ENCODE measurements at regions of chr10 and their contacts with region 1.

Region 1: GRCh38 chr10:119750391-119751230 is 24.8 kb downstream of the INPP5F start:
- DNase-seq: peak; percentile 82
- H3K4me3 ChIP-seq: no peak overlapping the region
- H3K27ac ChIP-seq: no peak overlapping the region
- H3K4me1 ChIP-seq: peaks cover 8% of the 10 kb centered on the region
- H3K27me3 ChIP-seq: no peaks in the 10 kb centered on the region
- CTCF ChIP-seq: peak; percentile 86 to 94
- POLR2A ChIP-seq: no peak

Region 2: DNA sequence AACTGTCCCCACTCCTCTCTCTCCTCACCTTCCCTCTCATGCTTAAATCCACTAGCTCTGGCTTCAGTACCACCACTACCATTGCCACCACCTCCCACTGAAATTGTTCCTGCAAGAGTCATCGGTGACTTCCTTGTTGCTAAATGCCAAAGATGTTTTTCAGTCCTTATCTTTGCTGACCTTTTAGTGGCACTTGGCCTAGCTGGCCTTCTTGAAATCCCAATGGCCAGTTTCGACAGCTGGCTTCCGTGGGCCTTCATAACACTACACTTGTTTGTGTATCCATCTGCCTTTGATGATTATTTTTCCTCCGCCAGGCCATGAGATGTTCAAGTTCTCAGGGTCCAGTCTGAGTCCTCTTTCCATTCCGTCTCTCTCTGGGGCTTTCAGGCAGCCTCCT is 839.2 kb before region 1 on chr10:
- CTCF ChIA-PET with region 1: no interaction called
- POLR2A ChIA-PET with region 1: no interaction called
- dilution Hi-C with region 1: no loop called
- intact Hi-C with region 1: no loop called
- DNase-seq: peak; percentile 12
- H3K4me3 ChIP-seq: no peak overlapping the region
- H3K27ac ChIP-seq: no peak overlapping the region
- H3K4me1 ChIP-seq: peaks cover 3% of the 10 kb centered on the region
- H3K27me3 ChIP-seq: peaks cover 8% of the 10 kb centered on the region in 2 experiments
- CTCF ChIP-seq: no peak
- POLR2A ChIP-seq: no peak

Region 3: GRCh38 chr10:119680050-119680449 is 70.6 kb before region 1 on chr10:
- CTCF ChIA-PET with region 1: interaction called, 75 read pairs
- POLR2A ChIA-PET with region 1: no interaction called
- dilution Hi-C with region 1: no loop called
- intact Hi-C with region 1: no loop called
- DNase-seq: peak; percentile 86
- H3K4me3 ChIP-seq: no peak overlapping the region
- H3K27ac ChIP-seq: peak overlapping the region; percentile 92
- H3K4me1 ChIP-seq: peaks cover 25% of the 10 kb centered on the region
- H3K27me3 ChIP-seq: no peaks in the 10 kb centered on the region
- CTCF ChIP-seq: no peak
- POLR2A ChIP-seq: peak; percentile 67

Region 4: DNA sequence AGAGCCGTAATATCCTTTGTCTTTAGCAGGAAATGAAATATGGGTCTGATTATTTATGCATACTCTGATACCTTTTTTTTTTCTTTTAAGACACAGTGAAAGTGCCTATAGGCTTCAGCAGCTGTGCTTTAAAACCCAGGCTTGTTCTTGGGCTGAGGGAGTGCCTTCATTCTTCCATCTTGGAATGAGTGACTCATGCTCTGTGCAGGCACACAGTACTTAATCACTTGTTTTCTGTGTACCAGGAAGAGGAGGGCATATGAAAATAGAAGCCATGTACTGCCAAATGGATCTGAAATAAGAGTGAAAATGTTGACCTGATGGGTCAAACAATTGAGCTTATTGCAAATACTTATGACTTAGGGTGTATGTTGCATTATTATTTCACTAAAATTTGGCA is 12.8 kb before region 1 on chr10:
- CTCF ChIA-PET with region 1: interaction called, 25 read pairs
- POLR2A ChIA-PET with region 1: interaction called, 3 read pairs
- dilution Hi-C with region 1: no loop called
- intact Hi-C with region 1: no loop called
- DNase-seq: peak; percentile 94
- H3K4me3 ChIP-seq: peak overlapping the region in 1 of 3 experiments; percentile 31
- H3K27ac ChIP-seq: peak overlapping the region; percentile 62
- H3K4me1 ChIP-seq: peaks cover 24% of the 10 kb centered on the region
- H3K27me3 ChIP-seq: no peaks in the 10 kb centered on the region
- CTCF ChIP-seq: no peak
- POLR2A ChIP-seq: no peak

Region 5: GRCh38 chr10:119784340-119785070 is 33.9 kb after region 1 on chr10:
- CTCF ChIA-PET with region 1: interaction called, 10 read pairs
- POLR2A ChIA-PET with region 1: no interaction called
- dilution Hi-C with region 1: no loop called
- intact Hi-C with region 1: no loop called
- DNase-seq: no peak
- H3K4me3 ChIP-seq: no peak overlapping the region
- H3K27ac ChIP-seq: no peak overlapping the region
- H3K4me1 ChIP-seq: peaks cover 24% of the 10 kb centered on the region
- H3K27me3 ChIP-seq: no peaks in the 10 kb centered on the region
- CTCF ChIP-seq: no peak
- POLR2A ChIP-seq: no peak

Region 6: DNA sequence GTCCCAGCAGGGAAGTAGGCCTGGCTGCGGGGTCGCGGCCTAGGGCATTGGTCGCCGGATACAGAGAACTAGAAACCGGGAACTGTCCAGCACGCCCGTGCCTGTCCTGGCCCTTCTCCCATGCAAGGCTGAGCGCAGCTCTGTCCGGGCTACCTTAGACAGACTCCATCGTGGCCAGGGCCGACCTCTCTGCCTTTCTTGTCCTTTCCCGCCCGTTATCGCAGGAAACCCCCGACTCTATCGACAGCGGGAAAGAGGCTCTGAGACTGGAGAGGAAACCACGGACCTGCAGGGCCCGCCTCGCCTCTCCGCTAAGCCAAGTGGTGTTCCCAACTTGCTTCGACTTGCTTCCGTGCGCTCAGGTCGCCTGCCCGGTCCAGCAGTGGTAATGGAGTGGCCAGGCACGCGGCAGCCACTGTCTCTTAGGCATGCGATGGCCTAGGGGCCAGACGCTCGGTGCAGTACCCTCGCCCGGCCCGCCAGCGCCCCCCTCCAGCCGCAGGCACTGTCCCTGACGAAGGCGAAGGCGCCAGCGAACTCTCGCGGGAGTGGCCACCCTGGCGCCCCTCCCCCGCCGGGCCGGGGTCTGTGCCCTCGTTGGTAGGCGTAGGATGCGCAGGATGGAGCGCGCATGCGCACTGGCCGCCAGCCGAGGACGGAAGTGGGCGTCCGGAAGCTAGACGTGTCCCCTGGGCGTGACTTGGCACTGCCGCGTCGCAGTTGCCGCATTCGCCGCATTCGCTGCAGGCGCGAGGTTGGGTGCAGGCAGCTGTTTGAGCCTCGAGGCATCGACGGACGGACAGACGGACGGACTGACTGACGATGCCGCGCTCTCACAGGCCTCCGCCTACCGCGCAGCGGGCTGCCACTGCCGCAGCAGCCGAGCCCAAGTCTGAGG is 67.6 kb after region 1 on chr10:
- CTCF ChIA-PET with region 1: interaction called, 26 read pairs
- POLR2A ChIA-PET with region 1: no interaction called
- dilution Hi-C with region 1: no loop called
- intact Hi-C with region 1: no loop called
- DNase-seq: peak; percentile 29
- H3K4me3 ChIP-seq: peak overlapping the region in 1 of 3 experiments; percentile 28
- H3K27ac ChIP-seq: no peak overlapping the region
- H3K4me1 ChIP-seq: no peaks in the 10 kb centered on the region
- H3K27me3 ChIP-seq: no peaks in the 10 kb centered on the region
- CTCF ChIP-seq: peak in 1 of 2 donors; percentile 20
- POLR2A ChIP-seq: no peak

Region 7: DNA sequence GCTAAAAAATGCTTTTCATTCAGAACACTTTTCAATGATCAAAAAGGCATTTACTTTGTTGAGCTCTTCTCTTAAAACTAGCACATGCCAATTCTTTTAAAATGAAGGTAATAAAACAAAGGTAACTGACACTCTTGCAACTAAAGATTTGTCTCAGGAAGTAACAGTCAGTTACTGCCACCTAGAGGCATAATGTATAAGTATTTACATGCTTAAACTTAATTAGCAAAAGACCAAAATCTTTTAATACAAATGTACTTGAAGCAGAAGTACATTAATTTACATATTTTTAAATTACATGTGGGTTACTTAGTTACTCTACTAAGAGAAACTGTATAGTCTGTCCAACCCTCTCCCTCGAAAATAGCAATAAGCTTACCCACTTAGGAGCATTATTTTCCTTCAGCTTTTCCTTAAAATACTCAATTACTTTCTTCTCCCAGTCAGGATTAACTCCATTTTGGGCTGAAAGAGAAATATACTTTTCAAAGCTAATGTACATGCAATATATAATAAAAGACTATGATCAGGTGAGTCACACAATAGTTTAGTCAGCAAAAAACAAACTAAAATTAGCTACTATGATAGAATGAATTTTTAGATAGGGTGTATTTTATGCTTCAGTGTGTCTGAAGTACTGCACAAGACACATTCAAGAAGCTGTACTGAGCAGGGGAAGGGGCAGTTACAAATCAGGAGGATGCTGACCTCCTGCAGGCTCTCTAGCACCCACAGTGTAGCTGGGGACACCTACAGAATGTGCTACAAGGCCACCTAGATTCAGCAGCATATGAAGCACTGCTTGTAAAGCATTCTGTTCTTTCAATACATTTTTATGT is 109.0 kb after region 1 on chr10:
- CTCF ChIA-PET with region 1: interaction called, 280 read pairs
- POLR2A ChIA-PET with region 1: interaction called, 5 read pairs
- dilution Hi-C with region 1: no loop called
- intact Hi-C with region 1: loop called (anchors 1 kb)
- DNase-seq: peak; percentile 74
- H3K4me3 ChIP-seq: no peak overlapping the region
- H3K27ac ChIP-seq: no peak overlapping the region
- H3K4me1 ChIP-seq: peaks cover 5% of the 10 kb centered on the region
- H3K27me3 ChIP-seq: no peaks in the 10 kb centered on the region
- CTCF ChIP-seq: peak; percentile 27 to 36
- POLR2A ChIP-seq: no peak

Region 8: DNA sequence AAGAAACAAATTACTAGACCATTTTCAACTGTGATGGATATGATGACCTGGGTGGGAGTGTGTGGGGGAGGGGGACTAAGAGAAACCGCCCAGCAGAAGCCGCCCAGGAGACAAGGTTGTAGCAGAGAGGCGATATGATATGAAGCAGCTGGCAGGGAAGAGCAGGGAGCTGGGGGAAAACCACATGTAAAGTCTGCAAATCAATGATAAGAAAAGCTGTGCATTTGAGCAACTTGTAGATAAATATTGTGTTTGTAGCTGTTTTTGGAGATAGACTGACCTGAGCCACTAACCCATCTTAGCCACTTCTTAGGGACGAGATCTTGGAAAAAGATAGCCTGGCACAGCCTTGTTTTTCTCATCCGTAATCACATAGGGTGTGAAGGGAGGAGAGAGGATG is 394.5 kb after region 1 on chr10:
- CTCF ChIA-PET with region 1: no interaction called
- POLR2A ChIA-PET with region 1: no interaction called
- dilution Hi-C with region 1: no loop called
- intact Hi-C with region 1: no loop called
- DNase-seq: no peak
- H3K4me3 ChIP-seq: no peak overlapping the region
- H3K27ac ChIP-seq: no peak overlapping the region
- H3K4me1 ChIP-seq: no peaks in the 10 kb centered on the region
- H3K27me3 ChIP-seq: no peaks in the 10 kb centered on the region
- CTCF ChIP-seq: no peak
- POLR2A ChIP-seq: no peak

Region 9: GRCh38 chr10:120336911-120337540 is 586.4 kb after region 1 on chr10:
- CTCF ChIA-PET with region 1: interaction called, 8 read pairs
- POLR2A ChIA-PET with region 1: no interaction called
- dilution Hi-C with region 1: no loop called
- intact Hi-C with region 1: loop called (anchors 2 kb)
- DNase-seq: peak; percentile 66
- H3K4me3 ChIP-seq: no peak overlapping the region
- H3K27ac ChIP-seq: no peak overlapping the region
- H3K4me1 ChIP-seq: no peaks in the 10 kb centered on the region
- H3K27me3 ChIP-seq: peaks cover 0 to 2% of the 10 kb centered on the region in 2 experiments
- CTCF ChIP-seq: peak; percentile 82 to 85
- POLR2A ChIP-seq: no peak